ENCODE measurements at regions of chr14 and their contacts with region 1.

Region 1: DNA sequence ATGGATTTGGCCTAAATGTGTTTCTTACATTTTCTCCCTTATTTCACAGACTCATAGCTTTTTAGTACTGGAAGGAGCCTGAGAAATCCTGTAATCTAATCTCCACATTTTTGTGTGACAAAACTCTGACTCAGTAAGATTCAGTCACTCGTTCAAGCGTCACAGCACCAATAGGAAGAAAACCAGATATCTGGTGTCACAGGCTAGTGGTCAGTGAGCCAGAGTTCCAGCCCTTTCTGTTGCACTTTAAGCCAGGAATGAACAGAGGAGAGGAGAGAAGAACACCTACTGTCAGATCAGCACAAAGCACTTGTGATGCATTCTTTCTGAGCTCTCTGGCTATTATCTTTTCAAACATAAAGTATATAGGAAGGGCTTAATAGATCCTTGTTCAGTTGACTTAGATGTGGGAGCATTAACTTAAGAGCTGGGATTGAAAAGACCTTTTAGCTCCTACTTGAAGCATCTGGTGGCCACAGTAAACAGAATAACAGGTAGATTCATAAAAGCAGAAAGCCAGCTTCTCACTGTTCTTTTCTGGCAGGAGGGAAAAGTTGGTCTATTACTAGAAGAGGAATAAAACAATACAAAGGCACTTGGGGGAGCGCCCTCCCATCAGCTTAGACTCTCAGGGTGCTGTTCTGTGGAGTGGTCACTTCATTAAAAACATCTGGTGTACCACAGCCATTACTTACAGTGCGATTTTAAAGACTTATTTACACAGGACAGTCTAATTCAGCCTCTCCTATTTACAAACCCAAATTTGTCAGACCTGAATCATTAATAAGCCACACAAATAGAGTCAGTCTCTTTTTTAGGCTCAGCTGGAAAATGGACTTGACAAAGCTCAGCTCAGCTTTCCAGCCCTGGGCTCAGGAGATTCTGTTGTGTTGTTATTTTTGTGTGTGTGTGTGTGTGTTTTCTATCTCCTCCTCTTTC is 12.2 kb upstream of the NID2 start:
- H3K4me3 ChIP-seq: no peak overlapping the region
- H3K27ac ChIP-seq: no peak overlapping the region
- H3K4me1 ChIP-seq: no peaks in the 10 kb centered on the region
- CTCF ChIP-seq: no peak

Region 2: DNA sequence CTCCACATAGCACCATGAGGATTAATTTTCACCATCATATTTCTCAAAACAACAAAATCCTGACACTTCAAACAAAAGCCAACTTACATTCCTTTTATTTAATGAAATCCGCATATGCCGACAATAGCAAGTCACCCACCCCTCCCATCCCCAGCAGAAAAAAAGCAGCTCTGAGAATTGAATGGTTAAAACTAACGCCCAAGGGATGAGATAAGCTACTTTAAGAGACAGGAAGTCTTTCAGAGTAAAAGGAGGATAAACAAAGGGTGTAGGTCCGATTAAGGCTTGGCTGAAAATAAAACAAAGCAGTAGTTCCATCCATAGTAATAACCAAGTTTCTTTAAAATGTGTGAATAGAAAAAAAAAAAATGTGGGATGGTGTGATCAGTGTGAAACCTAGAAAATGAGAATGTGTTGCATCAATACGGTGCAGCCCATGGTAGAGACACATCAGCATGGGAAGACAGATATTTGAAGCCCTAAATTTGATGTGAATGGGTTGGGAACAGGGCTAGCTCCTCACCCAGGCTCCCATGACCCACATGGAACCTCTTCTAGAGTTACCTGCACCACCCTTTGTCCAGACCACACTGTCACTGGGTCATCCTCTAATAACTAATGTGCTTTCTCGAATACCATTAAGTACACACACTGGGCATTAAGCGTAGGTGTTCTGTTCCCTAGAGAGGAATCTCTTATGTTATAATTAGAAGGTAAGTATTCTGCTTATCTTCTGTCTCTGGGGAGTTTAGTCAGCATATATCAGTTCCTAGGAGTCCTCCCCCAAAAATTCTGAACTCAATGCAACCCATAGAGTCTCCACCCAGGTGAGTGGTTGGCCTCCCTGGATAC is 60.0 kb before region 1 on chr14:
- CTCF ChIA-PET with region 1: no interaction called
- POLR2A ChIA-PET with region 1: no interaction called
- H3K4me3 ChIP-seq: no peak overlapping the region
- H3K27ac ChIP-seq: no peak overlapping the region
- H3K4me1 ChIP-seq: no peaks in the 10 kb centered on the region
- CTCF ChIP-seq: no peak

Region 3: DNA sequence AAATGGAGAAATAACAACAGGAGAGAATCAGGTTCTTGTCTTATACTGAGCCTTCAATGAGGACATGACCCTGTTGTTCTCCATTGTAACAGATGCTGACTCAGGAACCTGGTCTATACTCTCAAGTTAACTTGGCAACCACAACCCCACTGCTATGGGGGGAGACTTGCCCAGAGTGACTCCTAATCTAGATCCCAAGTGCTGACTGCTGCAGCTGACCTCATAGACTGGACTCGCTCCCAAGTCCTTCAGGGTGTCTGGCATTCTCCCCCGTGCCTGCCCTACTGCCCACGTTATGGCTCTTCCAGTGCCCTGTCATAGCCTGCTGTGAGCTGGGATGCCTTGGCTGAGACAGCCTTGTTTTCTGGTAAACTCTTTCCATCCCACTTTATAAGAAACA is 49.3 kb before region 1 on chr14:
- CTCF ChIA-PET with region 1: no interaction called
- POLR2A ChIA-PET with region 1: no interaction called
- H3K4me3 ChIP-seq: no peak overlapping the region
- H3K27ac ChIP-seq: no peak overlapping the region
- H3K4me1 ChIP-seq: no peaks in the 10 kb centered on the region
- CTCF ChIP-seq: no peak

Region 4: GRCh38 chr14:52068615-52069303 is 12.3 kb before region 1 on chr14 and contains the start of gene NID2:
- CTCF ChIA-PET with region 1: interaction called, 13 read pairs
- POLR2A ChIA-PET with region 1: interaction called, 14 read pairs
- H3K4me3 ChIP-seq: peak within 1 kb of the TSS; percentile 74
- H3K27ac ChIP-seq: peak within 1 kb of the TSS; percentile 53; the same call in 1 of the 2 replicates
- H3K4me1 ChIP-seq: peaks cover 5% of the 10 kb centered on the region; the same call in 1 of the 2 replicates
- CTCF ChIP-seq: peak; percentile 47